ENCODE measurements at regions of chr1 and their contacts with region 1.

Region 1: GRCh38 chr1:108125312-108126138 is 74.6 kb downstream of the SLC25A24 start:
- DNase-seq: peak; percentile 36 to 86 (median 67)
- ATAC-seq: peak; percentile 97
- H3K4me3 ChIP-seq: no peak overlapping the region
- H3K4me3 Mint-ChIP-seq: no peak overlapping the region
- H3K27ac ChIP-seq: no peak overlapping the region
- H3K27ac Mint-ChIP-seq: no peak overlapping the region
- H3K4me1 ChIP-seq: no peaks in the 10 kb centered on the region
- H3K4me1 Mint-ChIP-seq: peaks cover 4% of the 10 kb centered on the region
- H3K27me3 ChIP-seq: no peaks in the 10 kb centered on the region
- H3K27me3 Mint-ChIP-seq: no peaks in the 10 kb centered on the region
- CTCF ChIP-seq: peak; percentile 88

Region 2: GRCh38 chr1:107793896-107794453 is 331.6 kb before region 1 on chr1:
- CTCF ChIA-PET with region 1: interaction called, 492 read pairs
- POLR2A ChIA-PET with region 1: no interaction called
- intact Hi-C with region 1: no loop called
- DNase-seq: no peak
- ATAC-seq: no peak
- H3K4me3 ChIP-seq: no peak overlapping the region
- H3K4me3 Mint-ChIP-seq: no peak overlapping the region
- H3K27ac ChIP-seq: no peak overlapping the region
- H3K27ac Mint-ChIP-seq: no peak overlapping the region
- H3K4me1 ChIP-seq: peaks cover 4% of the 10 kb centered on the region
- H3K4me1 Mint-ChIP-seq: peaks cover 29% of the 10 kb centered on the region
- H3K27me3 ChIP-seq: no peaks in the 10 kb centered on the region
- H3K27me3 Mint-ChIP-seq: no peaks in the 10 kb centered on the region
- CTCF ChIP-seq: no peak

Region 3: DNA sequence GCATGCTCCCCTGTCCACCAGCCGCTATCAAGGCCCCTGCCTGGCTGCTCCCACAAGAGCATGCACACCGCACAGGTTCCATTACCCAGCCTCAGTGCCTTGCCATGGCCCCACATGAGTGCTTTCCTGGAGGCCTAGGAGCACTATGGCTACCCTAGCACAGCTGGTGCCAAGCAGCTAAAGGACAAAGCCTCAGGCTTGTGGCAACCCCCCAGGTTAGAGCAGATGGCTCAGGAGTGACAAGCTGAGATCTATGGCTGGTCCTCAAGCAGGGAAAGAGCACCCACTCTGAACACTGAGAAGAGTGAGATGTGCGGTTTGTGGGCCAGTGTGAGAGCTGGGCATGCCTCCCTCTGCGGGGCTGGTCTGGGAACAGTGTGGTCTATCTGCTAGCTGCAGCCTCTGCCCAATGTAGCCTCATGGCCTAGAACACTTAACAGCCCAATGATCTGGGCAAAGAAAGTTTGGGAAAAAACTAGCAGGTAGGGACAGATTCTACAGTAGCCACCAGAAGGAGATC is 290.3 kb before region 1 on chr1:
- CTCF ChIA-PET with region 1: interaction called, 10 read pairs
- POLR2A ChIA-PET with region 1: no interaction called
- intact Hi-C with region 1: no loop called
- DNase-seq: no peak
- ATAC-seq: no peak
- H3K4me3 ChIP-seq: no peak overlapping the region
- H3K4me3 Mint-ChIP-seq: no peak overlapping the region
- H3K27ac ChIP-seq: no peak overlapping the region
- H3K27ac Mint-ChIP-seq: no peak overlapping the region
- H3K4me1 ChIP-seq: peaks cover 34% of the 10 kb centered on the region
- H3K4me1 Mint-ChIP-seq: peaks cover 69% of the 10 kb centered on the region
- H3K27me3 ChIP-seq: no peaks in the 10 kb centered on the region
- H3K27me3 Mint-ChIP-seq: no peaks in the 10 kb centered on the region
- CTCF ChIP-seq: no peak

Region 4: DNA sequence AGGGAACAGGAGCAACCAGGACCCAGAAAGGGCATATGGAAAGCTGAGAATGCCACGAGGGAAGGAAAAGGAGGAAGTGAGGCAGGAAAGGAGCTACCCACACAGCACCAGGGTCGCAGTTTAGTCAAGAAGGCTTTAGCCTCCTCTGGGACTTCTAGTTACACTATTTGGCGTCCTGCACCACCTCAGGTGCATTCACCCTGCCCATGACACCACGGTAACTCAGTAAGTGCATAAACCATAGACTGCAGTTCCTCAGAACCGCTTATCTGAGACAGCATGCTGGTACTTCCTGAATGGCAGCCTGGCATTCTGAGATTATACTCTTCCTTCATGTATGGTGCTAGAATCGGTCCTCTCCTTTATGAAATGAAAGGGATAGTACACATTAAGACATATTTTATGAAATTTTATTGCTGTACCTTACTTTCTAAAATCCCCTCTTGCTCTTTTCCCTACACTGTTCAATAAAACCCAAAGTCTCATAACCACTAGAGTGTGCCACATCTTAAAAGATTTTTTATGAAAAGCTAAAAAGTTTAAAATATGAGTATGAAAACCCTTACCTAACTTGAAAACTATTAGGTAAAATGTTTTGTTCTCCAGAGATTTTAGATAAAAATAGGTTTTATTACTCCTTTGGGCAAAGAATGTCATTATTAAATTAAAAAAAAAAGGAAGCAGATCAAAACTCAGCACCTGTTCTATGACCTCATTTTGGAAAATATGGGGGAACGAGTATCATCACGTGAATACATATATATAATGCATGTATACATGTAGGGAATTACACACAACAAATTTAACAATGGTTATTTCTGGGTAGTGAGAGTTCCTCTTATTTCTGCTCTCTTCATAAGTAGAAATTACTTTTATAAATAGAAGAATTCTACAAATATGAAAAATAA is 227.8 kb before region 1 on chr1:
- CTCF ChIA-PET with region 1: interaction called, 4 read pairs
- POLR2A ChIA-PET with region 1: no interaction called
- intact Hi-C with region 1: loop called (anchors 2 kb)
- DNase-seq: peak in 5 of 9 experiments; percentile 3 to 53 (median 40)
- ATAC-seq: peak; percentile 52
- H3K4me3 ChIP-seq: peak overlapping the region in 1 of 2 experiments; percentile 22
- H3K4me3 Mint-ChIP-seq: peak overlapping the region; percentile 64
- H3K27ac ChIP-seq: peak overlapping the region; percentile 14 to 62
- H3K27ac Mint-ChIP-seq: peak overlapping the region; percentile 78
- H3K4me1 ChIP-seq: peaks cover 49% of the 10 kb centered on the region
- H3K4me1 Mint-ChIP-seq: peaks cover 51% of the 10 kb centered on the region
- H3K27me3 ChIP-seq: no peaks in the 10 kb centered on the region
- H3K27me3 Mint-ChIP-seq: no peaks in the 10 kb centered on the region
- CTCF ChIP-seq: no peak

Region 5: GRCh38 chr1:108016451-108016920 is 109.0 kb before region 1 on chr1:
- CTCF ChIA-PET with region 1: no interaction called
- POLR2A ChIA-PET with region 1: no interaction called
- intact Hi-C with region 1: no loop called
- DNase-seq: no peak
- ATAC-seq: no peak
- H3K4me3 ChIP-seq: no peak overlapping the region
- H3K4me3 Mint-ChIP-seq: no peak overlapping the region
- H3K27ac ChIP-seq: no peak overlapping the region
- H3K27ac Mint-ChIP-seq: no peak overlapping the region
- H3K4me1 ChIP-seq: no peaks in the 10 kb centered on the region
- H3K4me1 Mint-ChIP-seq: no peaks in the 10 kb centered on the region
- H3K27me3 ChIP-seq: no peaks in the 10 kb centered on the region
- H3K27me3 Mint-ChIP-seq: no peaks in the 10 kb centered on the region
- CTCF ChIP-seq: no peak

Region 6: DNA sequence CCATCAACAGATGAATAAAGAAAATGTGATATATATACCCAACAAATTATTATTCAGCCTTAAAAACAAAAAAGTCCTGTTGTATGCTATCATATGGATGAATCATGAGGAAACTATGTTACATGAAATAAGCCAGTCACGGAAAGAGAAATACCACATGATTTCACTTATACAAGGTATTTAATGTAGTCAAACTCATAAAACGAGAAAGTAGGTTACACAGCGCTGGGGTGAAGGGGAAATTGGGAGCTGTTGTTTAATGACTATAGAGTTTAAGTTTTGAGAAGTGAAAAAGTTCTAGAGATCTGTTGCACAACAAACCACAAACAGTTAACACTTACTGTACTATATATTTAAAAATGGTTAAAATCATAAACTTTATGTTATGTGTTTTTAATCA is 16.1 kb after region 1 on chr1:
- CTCF ChIA-PET with region 1: interaction called, 17 read pairs
- POLR2A ChIA-PET with region 1: no interaction called
- intact Hi-C with region 1: no loop called
- DNase-seq: no peak
- ATAC-seq: no peak
- H3K4me3 ChIP-seq: no peak overlapping the region
- H3K4me3 Mint-ChIP-seq: no peak overlapping the region
- H3K27ac ChIP-seq: no peak overlapping the region
- H3K27ac Mint-ChIP-seq: no peak overlapping the region
- H3K4me1 ChIP-seq: no peaks in the 10 kb centered on the region
- H3K4me1 Mint-ChIP-seq: no peaks in the 10 kb centered on the region
- H3K27me3 ChIP-seq: no peaks in the 10 kb centered on the region
- H3K27me3 Mint-ChIP-seq: no peaks in the 10 kb centered on the region
- CTCF ChIP-seq: no peak

Measured in CD8-positive, alpha-beta T cell (primary cell).